MCF 10A (cell line): ENCODE measurements at regions of chr3 and their contacts with region 1.

Region 1: DNA sequence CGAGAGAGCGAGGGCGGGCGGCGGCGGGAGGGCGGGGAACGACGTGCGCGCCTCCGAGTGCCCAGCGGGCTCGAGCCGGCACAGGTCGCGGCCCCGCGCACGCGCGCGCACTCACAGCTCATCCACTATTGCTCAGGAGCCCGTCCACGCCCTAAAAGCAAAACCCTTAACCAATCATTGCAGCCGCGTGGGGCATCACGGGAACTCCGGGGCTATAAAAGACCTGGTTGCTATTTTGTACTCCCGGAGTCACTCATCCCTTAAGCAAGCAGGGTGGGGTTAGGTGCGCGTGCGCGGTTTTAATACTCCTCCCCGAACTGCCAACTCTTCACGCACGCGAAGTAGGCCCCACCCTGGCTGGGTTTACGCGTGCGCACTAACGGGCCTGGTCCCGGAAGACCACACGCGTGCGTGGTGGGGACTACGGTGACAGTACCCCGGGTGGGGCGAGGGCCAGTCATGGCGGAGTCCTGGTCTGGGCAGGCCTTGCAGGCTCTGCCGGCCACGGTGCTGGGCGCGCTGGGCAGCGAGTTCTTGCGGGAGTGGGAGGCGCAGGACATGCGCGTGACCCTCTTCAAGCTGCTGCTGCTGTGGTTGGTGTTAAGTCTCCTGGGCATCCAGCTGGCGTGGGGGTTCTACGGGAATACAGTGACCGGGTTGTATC is at the starts of genes RHOA and TCTA:
- DNase-seq: peak; percentile 100
- H3K4me3 Mint-ChIP-seq: peak within 1 kb of the TSS; percentile 90
- H3K27ac Mint-ChIP-seq: peak within 1 kb of the TSS; percentile 94
- H3K4me1 Mint-ChIP-seq: peaks cover 32% of the 10 kb centered on the region
- H3K27me3 Mint-ChIP-seq: no peaks in the 10 kb centered on the region
- CTCF ChIP-seq: no peak
- total RNA-seq, gene RHOA: 273 and 298 TPM in 2 replicates
- total RNA-seq, gene TCTA: 14.0 and 17.2 TPM in 2 replicates

Region 2: DNA sequence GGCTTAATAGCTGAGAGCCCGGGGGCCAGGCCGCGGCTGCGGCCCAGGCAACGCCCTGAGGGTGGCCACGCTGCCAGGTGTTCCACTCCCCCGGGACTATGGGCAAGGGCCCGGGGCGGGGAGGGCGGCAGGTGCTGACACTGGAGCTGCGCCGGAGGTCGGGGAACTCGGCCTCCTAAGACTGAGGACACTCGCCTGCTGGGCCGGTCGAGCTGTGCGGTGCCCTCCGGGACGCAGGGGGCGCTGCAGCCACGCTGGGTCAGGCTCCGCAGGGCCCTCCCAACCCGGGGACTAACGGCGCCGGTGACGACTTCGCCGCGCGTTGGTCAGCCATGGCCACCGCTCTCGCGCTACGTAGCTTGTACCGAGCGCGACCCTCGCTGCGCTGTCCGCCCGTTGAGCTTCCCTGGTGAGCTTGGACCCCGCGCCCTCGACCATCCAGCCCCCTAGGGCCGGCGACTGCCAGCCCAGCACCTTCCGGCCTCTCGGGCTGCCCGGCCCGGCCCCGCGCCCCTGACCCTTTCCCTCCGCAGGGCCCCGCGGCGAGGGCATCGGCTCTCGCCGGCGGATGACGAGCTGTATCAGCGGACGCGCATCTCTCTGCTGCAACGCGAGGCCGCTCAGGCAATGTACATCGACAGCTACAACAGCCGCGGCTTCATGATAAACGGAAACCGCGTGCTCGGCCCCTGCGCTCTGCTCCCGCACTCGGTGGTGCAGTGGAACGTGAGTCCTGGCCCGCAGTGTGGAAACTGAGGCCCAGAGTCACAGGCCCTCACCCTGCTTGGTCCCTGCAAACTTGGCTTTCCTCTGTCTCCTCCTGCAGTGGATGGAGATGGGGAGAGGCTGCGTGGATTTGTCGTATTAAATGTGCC is 390.1 kb before region 1 on chr3 and contains the start of gene NDUFAF3:
- CTCF ChIA-PET with region 1: no interaction called
- POLR2A ChIA-PET with region 1: interaction called, 13 read pairs
- intact Hi-C with region 1: no loop called
- DNase-seq: peak; percentile 93
- H3K4me3 Mint-ChIP-seq: peak within 1 kb of the TSS; percentile 89
- H3K27ac Mint-ChIP-seq: peak within 1 kb of the TSS; percentile 95
- H3K4me1 Mint-ChIP-seq: peaks cover 13% of the 10 kb centered on the region
- H3K27me3 Mint-ChIP-seq: no peaks in the 10 kb centered on the region
- CTCF ChIP-seq: peak; percentile 95
- total RNA-seq, gene NDUFAF3: 77.8 and 86.5 TPM in 2 replicates

Region 3: GRCh38 chr3:49339945-49340800 is 71.9 kb before region 1 on chr3 and contains the start of gene USP4:
- CTCF ChIA-PET with region 1: interaction called, 5 read pairs
- POLR2A ChIA-PET with region 1: interaction called, 18 read pairs
- intact Hi-C with region 1: no loop called
- DNase-seq: peak; percentile 89
- H3K4me3 Mint-ChIP-seq: peak within 1 kb of the TSS; percentile 96
- H3K27ac Mint-ChIP-seq: peak within 1 kb of the TSS; percentile 87
- H3K4me1 Mint-ChIP-seq: peaks cover 19% of the 10 kb centered on the region
- H3K27me3 Mint-ChIP-seq: no peaks in the 10 kb centered on the region
- CTCF ChIP-seq: peak; percentile 26
- total RNA-seq, gene USP4: 52.6 and 54.1 TPM in 2 replicates

Region 4: GRCh38 chr3:49358217-49358883 is 53.8 kb before region 1 on chr3 and contains the start of gene GPX1:
- CTCF ChIA-PET with region 1: no interaction called
- POLR2A ChIA-PET with region 1: interaction called, 49 read pairs
- intact Hi-C with region 1: loop called (anchors 1 kb)
- DNase-seq: peak; percentile 98
- H3K4me3 Mint-ChIP-seq: peak within 1 kb of the TSS; percentile 95
- H3K27ac Mint-ChIP-seq: peak within 1 kb of the TSS; percentile 78
- H3K4me1 Mint-ChIP-seq: peaks cover 14% of the 10 kb centered on the region
- H3K27me3 Mint-ChIP-seq: no peaks in the 10 kb centered on the region
- CTCF ChIP-seq: no peak
- total RNA-seq, gene GPX1: 576 and 589 TPM in 2 replicates

Region 5: DNA sequence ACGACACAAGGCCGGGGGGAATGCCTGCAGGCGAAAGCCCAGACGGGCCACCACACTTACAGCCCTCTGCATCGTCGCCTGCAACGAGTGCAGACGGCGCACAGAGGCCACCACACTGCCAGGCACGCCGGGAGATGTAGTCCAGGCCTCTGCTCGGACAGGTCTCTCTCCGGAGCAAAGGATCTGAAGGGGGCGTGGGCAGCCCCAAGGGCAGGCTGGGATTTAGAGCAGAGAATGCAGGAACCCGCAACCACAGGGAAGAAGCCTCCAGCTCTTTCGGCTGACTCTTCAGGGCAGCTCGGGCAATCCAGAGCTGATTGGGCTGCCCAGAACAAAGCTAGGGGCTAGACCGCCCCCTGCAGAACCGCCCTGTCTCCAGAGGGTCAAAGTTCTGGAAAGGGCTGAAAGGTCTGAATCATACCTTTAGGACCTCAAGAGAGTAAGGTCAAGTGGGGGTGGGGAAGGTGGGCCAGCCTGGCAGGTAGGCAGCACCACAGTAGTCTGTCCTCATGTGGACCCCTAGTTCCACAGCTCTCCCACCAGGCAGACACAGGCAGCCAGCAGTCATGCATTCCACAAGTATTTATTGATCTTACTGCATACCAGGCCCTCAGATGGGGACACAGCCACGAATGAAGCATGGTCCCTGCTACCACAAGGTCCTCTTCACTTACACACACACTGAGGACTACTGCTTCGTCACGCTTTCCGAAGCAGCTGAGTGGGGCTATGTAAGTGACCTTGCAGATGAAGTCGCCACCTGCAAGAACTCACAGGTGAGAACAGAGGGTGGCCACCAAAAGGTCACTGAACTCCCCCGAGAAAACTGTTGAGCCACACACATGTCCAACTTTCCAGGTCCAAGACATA is 10.5 kb after region 1 on chr3 and contains the start of gene AMT:
- CTCF ChIA-PET with region 1: interaction called, 6 read pairs
- POLR2A ChIA-PET with region 1: interaction called, 34 read pairs
- intact Hi-C with region 1: no loop called
- DNase-seq: no peak
- H3K4me3 Mint-ChIP-seq: no peak within 1 kb of the TSS
- H3K27ac Mint-ChIP-seq: no peak within 1 kb of the TSS
- H3K4me1 Mint-ChIP-seq: peaks cover 17% of the 10 kb centered on the region
- H3K27me3 Mint-ChIP-seq: no peaks in the 10 kb centered on the region
- CTCF ChIP-seq: no peak
- total RNA-seq, gene AMT: 3.7 and 4.9 TPM in 2 replicates

Region 6: GRCh38 chr3:49445381-49445780 is 33.3 kb after region 1 on chr3:
- CTCF ChIA-PET with region 1: interaction called, 4 read pairs
- POLR2A ChIA-PET with region 1: interaction called, 21 read pairs
- intact Hi-C with region 1: loop called (anchors 1 kb)
- DNase-seq: no peak
- H3K4me3 Mint-ChIP-seq: no peak overlapping the region
- H3K27ac Mint-ChIP-seq: no peak overlapping the region
- H3K4me1 Mint-ChIP-seq: peaks cover 7% of the 10 kb centered on the region
- H3K27me3 Mint-ChIP-seq: no peaks in the 10 kb centered on the region
- CTCF ChIP-seq: no peak

Region 7: GRCh38 chr3:49469936-49470713 is 58.0 kb after region 1 on chr3 and contains the start of gene DAG1:
- CTCF ChIA-PET with region 1: no interaction called
- POLR2A ChIA-PET with region 1: interaction called, 27 read pairs
- intact Hi-C with region 1: no loop called
- DNase-seq: peak; percentile 96
- H3K4me3 Mint-ChIP-seq: peak within 1 kb of the TSS; percentile 89
- H3K27ac Mint-ChIP-seq: peak within 1 kb of the TSS; percentile 88
- H3K4me1 Mint-ChIP-seq: peaks cover 19% of the 10 kb centered on the region
- H3K27me3 Mint-ChIP-seq: no peaks in the 10 kb centered on the region
- CTCF ChIP-seq: no peak
- total RNA-seq, gene DAG1: 40.3 and 49.9 TPM in 2 replicates

Region 8: DNA sequence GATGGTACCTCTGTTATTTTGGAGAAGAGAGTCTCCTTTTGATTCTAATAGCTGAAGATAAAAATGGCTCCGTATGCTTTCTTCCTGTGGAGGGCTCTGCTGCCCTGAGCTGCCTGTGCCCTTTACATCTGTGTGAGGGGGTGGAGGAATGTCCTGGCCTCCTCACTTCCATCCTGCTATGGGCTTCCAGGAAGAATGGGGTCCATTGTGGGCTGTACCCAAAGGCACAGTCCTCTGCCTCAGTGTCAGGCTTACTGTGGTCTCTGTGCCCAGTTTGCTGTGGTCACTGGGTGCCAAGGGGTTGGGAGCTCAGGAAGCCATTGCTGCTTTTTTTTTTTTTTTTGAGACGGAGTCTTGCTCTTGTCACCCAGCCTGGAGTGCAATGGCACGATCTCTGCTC is 72.4 kb after region 1 on chr3:
- CTCF ChIA-PET with region 1: no interaction called
- POLR2A ChIA-PET with region 1: no interaction called
- intact Hi-C with region 1: no loop called
- DNase-seq: no peak
- H3K4me3 Mint-ChIP-seq: no peak overlapping the region
- H3K27ac Mint-ChIP-seq: no peak overlapping the region
- H3K4me1 Mint-ChIP-seq: peaks cover 4% of the 10 kb centered on the region
- H3K27me3 Mint-ChIP-seq: no peaks in the 10 kb centered on the region
- CTCF ChIP-seq: no peak